ENCODE measurements at regions of chr7 and their contacts with region 1.

Region 1: GRCh38 chr7:155769701-155770100 is 42.6 kb downstream of the SHH start:
- DNase-seq: no peak
- H3K4me3 ChIP-seq: no peak overlapping the region
- H3K4me3 Mint-ChIP-seq: no peak overlapping the region
- H3K27ac ChIP-seq: no peak overlapping the region
- H3K27ac Mint-ChIP-seq: peak overlapping the region in 1 of 7 donors; percentile 26
- H3K4me1 ChIP-seq: peaks cover 19 to 22% of the 10 kb centered on the region in 2 donors
- H3K4me1 Mint-ChIP-seq: peaks cover 17% of the 10 kb centered on the region
- H3K27me3 ChIP-seq: no peaks in the 10 kb centered on the region
- H3K27me3 Mint-ChIP-seq: no peaks in the 10 kb centered on the region
- CTCF ChIP-seq: no peak

Region 2: DNA sequence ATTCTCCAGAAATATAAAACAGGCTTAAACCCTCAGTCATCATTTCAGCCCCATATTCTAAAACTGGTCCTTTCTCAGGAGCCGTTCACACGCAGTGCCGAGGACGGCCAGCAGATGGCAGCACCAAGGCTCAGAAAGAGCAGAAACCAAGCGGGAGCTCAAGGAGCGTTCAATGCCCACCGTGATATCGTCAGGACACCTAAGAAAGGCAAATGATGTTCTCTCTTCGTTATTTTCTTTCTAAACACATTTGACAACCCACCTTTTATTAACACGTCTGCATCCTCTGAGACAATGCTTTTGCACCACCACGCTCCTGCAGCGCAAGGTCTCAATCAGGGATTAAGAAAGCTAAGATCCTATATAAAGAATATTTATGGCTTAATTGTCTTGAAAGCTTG is 170.9 kb before region 1 on chr7:
- intact Hi-C with region 1: loop called (anchors 2 kb)
- DNase-seq: peak; percentile 56 to 69 (median 64)
- H3K4me3 ChIP-seq: no peak overlapping the region
- H3K4me3 Mint-ChIP-seq: peak overlapping the region in 1 of 2 donors; percentile 66
- H3K27ac ChIP-seq: no peak overlapping the region
- H3K27ac Mint-ChIP-seq: no peak overlapping the region
- H3K4me1 ChIP-seq: peaks cover 37 to 39% of the 10 kb centered on the region in 2 donors
- H3K4me1 Mint-ChIP-seq: peaks cover 40% of the 10 kb centered on the region
- H3K27me3 ChIP-seq: no peaks in the 10 kb centered on the region
- H3K27me3 Mint-ChIP-seq: peaks cover 5 to 28% (median 6%) of the 10 kb centered on the region in 3 donors
- CTCF ChIP-seq: peak; percentile 94